ENCODE measurements at regions of chr4 and their contacts with region 1.

Region 1: DNA sequence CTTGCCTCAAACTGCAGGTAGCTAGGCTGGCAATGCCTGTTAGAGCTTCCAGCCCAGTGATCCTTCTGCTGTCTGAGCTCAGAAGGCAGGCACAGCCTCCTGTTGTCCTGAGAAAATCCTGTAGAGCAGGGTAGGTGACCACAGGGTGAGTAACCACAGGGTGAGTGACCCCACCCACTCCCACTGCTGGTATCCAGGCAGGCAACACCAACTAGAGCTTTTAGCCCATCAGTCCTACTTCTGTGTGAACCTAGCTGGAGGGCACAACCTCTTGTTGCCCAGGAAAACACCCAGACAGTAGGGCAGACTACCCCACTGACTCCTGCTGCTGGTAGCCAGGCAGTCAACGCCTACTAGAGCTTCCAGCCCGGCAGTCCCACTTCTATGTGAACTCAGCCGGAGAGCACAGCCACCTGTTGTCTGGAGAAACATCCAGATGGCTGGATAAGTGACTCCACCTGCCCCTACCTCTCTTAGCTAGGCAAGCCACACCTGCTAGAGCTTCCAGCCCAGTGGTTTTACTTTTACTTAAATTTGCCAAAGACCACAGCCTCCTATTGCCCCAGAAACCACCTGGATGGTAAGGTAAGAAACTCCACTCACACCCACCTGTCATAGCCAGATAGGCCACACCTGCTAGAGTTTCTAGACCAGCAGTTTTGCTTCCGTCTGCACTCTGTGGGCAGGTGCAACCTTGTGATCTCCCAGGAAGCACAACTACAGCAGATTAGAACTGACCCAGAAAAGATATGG is 371.6 kb downstream of the INPP4B start:
- DNase-seq: no peak
- ATAC-seq: peak; percentile 64
- H3K4me3 ChIP-seq: no peak overlapping the region
- H3K27ac ChIP-seq: no peak overlapping the region
- H3K4me1 ChIP-seq: no peaks in the 10 kb centered on the region
- H3K27me3 ChIP-seq: no peaks in the 10 kb centered on the region
- CTCF ChIP-seq: no peak
- EP300 ChIP-seq: no peak
- POLR2A ChIP-seq: no peak
- RAD21 ChIP-seq: no peak

Region 2: GRCh38 chr4:142262956-142263355 is 211.6 kb before region 1 on chr4:
- CTCF ChIA-PET with region 1: no interaction called
- POLR2A ChIA-PET with region 1: no interaction called
- RAD21 ChIA-PET with region 1: no interaction called
- SMC1A ChIA-PET with region 1: no interaction called
- in situ Hi-C with region 1: no loop called
- intact Hi-C with region 1: no loop called
- DNase-seq: no peak
- ATAC-seq: no peak
- H3K4me3 ChIP-seq: no peak overlapping the region
- H3K27ac ChIP-seq: no peak overlapping the region
- H3K4me1 ChIP-seq: no peaks in the 10 kb centered on the region
- H3K27me3 ChIP-seq: no peaks in the 10 kb centered on the region
- CTCF ChIP-seq: no peak
- EP300 ChIP-seq: no peak
- POLR2A ChIP-seq: no peak
- RAD21 ChIP-seq: no peak

Region 3: DNA sequence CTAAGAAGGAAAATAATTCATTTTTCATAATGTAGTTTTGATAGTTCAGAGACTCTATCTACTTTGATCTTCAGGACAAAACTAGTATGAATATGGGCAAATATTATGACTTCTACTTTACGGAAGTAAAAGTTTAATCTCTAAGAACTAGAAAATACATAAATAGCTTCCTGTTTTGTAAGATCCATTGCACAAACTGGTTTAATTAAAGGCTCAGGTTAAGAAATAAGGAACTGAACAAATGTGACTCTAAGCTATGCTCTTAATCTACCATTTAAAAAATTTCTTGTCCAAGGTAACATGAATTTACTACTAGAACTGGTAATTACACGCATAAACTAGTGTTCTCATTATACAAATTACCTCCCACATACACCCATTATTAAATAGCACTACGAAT is 10.9 kb after region 1 on chr4:
- CTCF ChIA-PET with region 1: interaction called, 7 read pairs
- POLR2A ChIA-PET with region 1: interaction called, 3 read pairs
- RAD21 ChIA-PET with region 1: interaction called, 4 read pairs
- SMC1A ChIA-PET with region 1: interaction called, 17 read pairs
- in situ Hi-C with region 1: no loop called
- intact Hi-C with region 1: no loop called
- DNase-seq: no peak
- ATAC-seq: no peak
- H3K4me3 ChIP-seq: no peak overlapping the region
- H3K27ac ChIP-seq: no peak overlapping the region
- H3K4me1 ChIP-seq: no peaks in the 10 kb centered on the region
- H3K27me3 ChIP-seq: no peaks in the 10 kb centered on the region
- CTCF ChIP-seq: no peak
- EP300 ChIP-seq: no peak
- POLR2A ChIP-seq: no peak
- RAD21 ChIP-seq: no peak

Region 4: GRCh38 chr4:142493249-142494110 is 19.0 kb after region 1 on chr4:
- CTCF ChIA-PET with region 1: interaction called, 4 read pairs
- POLR2A ChIA-PET with region 1: no interaction called
- RAD21 ChIA-PET with region 1: interaction called, 3 read pairs
- SMC1A ChIA-PET with region 1: interaction called, 14 read pairs
- in situ Hi-C with region 1: no loop called
- intact Hi-C with region 1: no loop called
- DNase-seq: no peak
- ATAC-seq: no peak
- H3K4me3 ChIP-seq: no peak overlapping the region
- H3K27ac ChIP-seq: no peak overlapping the region
- H3K4me1 ChIP-seq: no peaks in the 10 kb centered on the region
- H3K27me3 ChIP-seq: no peaks in the 10 kb centered on the region
- CTCF ChIP-seq: no peak
- EP300 ChIP-seq: no peak
- POLR2A ChIP-seq: no peak
- RAD21 ChIP-seq: no peak

Measured in GM12878 (cell line).